Activated CD4-positive, alpha-beta T cell treated with anti-CD3 and anti-CD28 coated beads, Interleukin-2, amount 10 ng/mL, durations not matched to agents 7 days and 5 days (primary cell): ENCODE measurements at regions of chr4 and their contacts with region 1.

Region 1: GRCh38 chr4:22389240-22389870 is 126.5 kb downstream of the ADGRA3 start:
- DNase-seq: peak; percentile 59
- H3K4me3 Mint-ChIP-seq: no peak overlapping the region
- H3K27ac Mint-ChIP-seq: no peak overlapping the region
- H3K4me1 Mint-ChIP-seq: peaks cover 1% of the 10 kb centered on the region
- H3K27me3 Mint-ChIP-seq: no peaks in the 10 kb centered on the region

Region 2: GRCh38 chr4:21790438-21791029 is 598.8 kb before region 1 on chr4:
- CTCF ChIA-PET with region 1: interaction called, 12 read pairs
- POLR2A ChIA-PET with region 1: no interaction called
- DNase-seq: no peak
- H3K4me3 Mint-ChIP-seq: no peak overlapping the region
- H3K27ac Mint-ChIP-seq: no peak overlapping the region
- H3K4me1 Mint-ChIP-seq: no peaks in the 10 kb centered on the region
- H3K27me3 Mint-ChIP-seq: no peaks in the 10 kb centered on the region

Region 3: GRCh38 chr4:22407361-22407760 is 18.0 kb after region 1 on chr4:
- CTCF ChIA-PET with region 1: no interaction called
- POLR2A ChIA-PET with region 1: no interaction called
- DNase-seq: no peak
- H3K4me3 Mint-ChIP-seq: no peak overlapping the region
- H3K27ac Mint-ChIP-seq: no peak overlapping the region
- H3K4me1 Mint-ChIP-seq: no peaks in the 10 kb centered on the region
- H3K27me3 Mint-ChIP-seq: no peaks in the 10 kb centered on the region

Region 4: DNA sequence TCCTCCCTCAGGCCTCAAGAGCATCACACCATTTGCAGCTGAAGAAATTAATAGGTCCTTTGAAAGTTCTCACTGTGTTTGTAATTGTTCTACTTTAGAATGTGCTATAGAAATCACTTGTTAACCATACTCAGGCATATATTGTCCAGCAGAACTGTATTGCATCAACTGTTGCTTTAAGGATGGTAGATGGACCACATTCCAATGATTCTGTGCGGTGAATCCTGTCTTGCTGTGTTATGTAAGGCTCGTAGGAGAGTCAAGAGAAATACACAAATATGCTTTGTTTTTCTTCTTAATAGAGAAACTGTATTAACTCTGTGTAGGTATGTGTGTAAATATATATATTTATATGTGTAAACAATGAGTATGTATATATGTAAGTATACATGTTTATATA is 132.9 kb after region 1 on chr4:
- CTCF ChIA-PET with region 1: no interaction called
- POLR2A ChIA-PET with region 1: no interaction called
- DNase-seq: no peak
- H3K4me3 Mint-ChIP-seq: no peak overlapping the region
- H3K27ac Mint-ChIP-seq: no peak overlapping the region
- H3K4me1 Mint-ChIP-seq: no peaks in the 10 kb centered on the region
- H3K27me3 Mint-ChIP-seq: no peaks in the 10 kb centered on the region